GM12878 (cell line): ENCODE measurements at regions of chr18 and their contacts with region 1.

Region 1: GRCh38 chr18:57630002-57630753 is 8.5 kb upstream of the NARS1 start:
- DNase-seq: peak; percentile 65
- ATAC-seq: peak; percentile 93
- H3K4me3 ChIP-seq: peak overlapping the region; percentile 90
- H3K27ac ChIP-seq: peak overlapping the region; percentile 87
- H3K4me1 ChIP-seq: peaks cover 6% of the 10 kb centered on the region
- H3K27me3 ChIP-seq: no peaks in the 10 kb centered on the region
- CTCF ChIP-seq: peak; percentile 74 to 81 (median 78)
- EP300 ChIP-seq: no peak
- POLR2A ChIP-seq: peak; percentile 74
- RAD21 ChIP-seq: peak; percentile 82

Region 2: GRCh38 chr18:57077786-57078552 is 552.2 kb before region 1 on chr18:
- CTCF ChIA-PET with region 1: no interaction called
- POLR2A ChIA-PET with region 1: no interaction called
- RAD21 ChIA-PET with region 1: no interaction called
- SMC1A ChIA-PET with region 1: no interaction called
- in situ Hi-C with region 1: no loop called
- intact Hi-C with region 1: no loop called
- DNase-seq: peak; percentile 93
- ATAC-seq: peak; percentile 90
- H3K4me3 ChIP-seq: no peak overlapping the region
- H3K27ac ChIP-seq: peak overlapping the region; percentile 28; the same call in 1 of the 2 replicates
- H3K4me1 ChIP-seq: peaks cover 25% of the 10 kb centered on the region
- H3K27me3 ChIP-seq: no peaks in the 10 kb centered on the region; a peak in 1 of 4 replicates
- CTCF ChIP-seq: peak; percentile 14 to 38 (median 30); a peak in 3 of 6 replicates
- EP300 ChIP-seq: peak; percentile 89 to 92
- POLR2A ChIP-seq: no peak
- RAD21 ChIP-seq: peak; percentile 28; the same call in 1 of the 2 replicates

Region 3: GRCh38 chr18:57754577-57755338 is 124.6 kb after region 1 on chr18:
- CTCF ChIA-PET with region 1: no interaction called
- POLR2A ChIA-PET with region 1: no interaction called
- RAD21 ChIA-PET with region 1: interaction called, 3 read pairs
- SMC1A ChIA-PET with region 1: interaction called, 5 read pairs
- in situ Hi-C with region 1: no loop called
- intact Hi-C with region 1: loop called (anchors 10 kb)
- DNase-seq: peak; percentile 38
- ATAC-seq: peak; percentile 96
- H3K4me3 ChIP-seq: no peak overlapping the region
- H3K27ac ChIP-seq: no peak overlapping the region
- H3K4me1 ChIP-seq: no peaks in the 10 kb centered on the region
- H3K27me3 ChIP-seq: no peaks in the 10 kb centered on the region
- CTCF ChIP-seq: no peak
- EP300 ChIP-seq: peak in 1 of 2 experiments; percentile 63; a peak in 1 of 4 replicates
- POLR2A ChIP-seq: no peak
- RAD21 ChIP-seq: no peak

Region 4: DNA sequence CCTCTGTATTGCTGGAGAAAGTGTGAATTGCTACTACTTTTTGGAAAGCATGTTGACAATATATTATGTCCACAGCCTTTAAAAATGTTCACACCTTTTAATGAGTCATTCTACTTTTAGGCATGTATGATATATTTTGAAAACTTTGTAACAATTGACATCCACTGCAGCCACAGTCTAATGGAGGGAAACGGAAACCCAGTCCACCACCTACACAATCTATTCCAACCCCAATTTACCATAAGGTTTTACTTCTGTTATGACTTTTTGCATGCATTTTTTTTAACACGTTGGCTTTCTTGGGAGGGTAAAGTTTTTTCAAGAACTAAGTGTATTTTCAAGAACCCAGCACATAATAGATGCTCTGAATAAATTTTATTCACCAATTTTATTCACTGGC is 211.4 kb after region 1 on chr18:
- CTCF ChIA-PET with region 1: interaction called, 13 read pairs
- POLR2A ChIA-PET with region 1: interaction called, 3 read pairs
- RAD21 ChIA-PET with region 1: interaction called, 14 read pairs
- SMC1A ChIA-PET with region 1: interaction called, 9 read pairs
- in situ Hi-C with region 1: loop called (anchors 25 kb)
- intact Hi-C with region 1: loop called (anchors 1 kb)
- DNase-seq: peak; percentile 79
- ATAC-seq: peak; percentile 61
- H3K4me3 ChIP-seq: no peak overlapping the region
- H3K27ac ChIP-seq: no peak overlapping the region
- H3K4me1 ChIP-seq: peaks cover 26% of the 10 kb centered on the region
- H3K27me3 ChIP-seq: peaks cover 0 to 4% of the 10 kb centered on the region in 2 experiments; a peak in 3 of 4 replicates
- CTCF ChIP-seq: no peak
- EP300 ChIP-seq: peak; percentile 91 to 94
- POLR2A ChIP-seq: no peak
- RAD21 ChIP-seq: no peak

Region 5: GRCh38 chr18:57881818-57882413 is 251.7 kb after region 1 on chr18:
- CTCF ChIA-PET with region 1: interaction called, 15 read pairs
- POLR2A ChIA-PET with region 1: no interaction called
- RAD21 ChIA-PET with region 1: interaction called, 5 read pairs
- SMC1A ChIA-PET with region 1: interaction called, 7 read pairs
- in situ Hi-C with region 1: no loop called
- intact Hi-C with region 1: loop called (anchors 2 kb)
- DNase-seq: peak; percentile 32
- ATAC-seq: peak; percentile 98
- H3K4me3 ChIP-seq: no peak overlapping the region
- H3K27ac ChIP-seq: no peak overlapping the region
- H3K4me1 ChIP-seq: no peaks in the 10 kb centered on the region
- H3K27me3 ChIP-seq: no peaks in the 10 kb centered on the region
- CTCF ChIP-seq: peak; percentile 89 to 94 (median 90); a peak in 5 of 6 replicates
- EP300 ChIP-seq: no peak
- POLR2A ChIP-seq: no peak
- RAD21 ChIP-seq: peak; percentile 93

Region 6: DNA sequence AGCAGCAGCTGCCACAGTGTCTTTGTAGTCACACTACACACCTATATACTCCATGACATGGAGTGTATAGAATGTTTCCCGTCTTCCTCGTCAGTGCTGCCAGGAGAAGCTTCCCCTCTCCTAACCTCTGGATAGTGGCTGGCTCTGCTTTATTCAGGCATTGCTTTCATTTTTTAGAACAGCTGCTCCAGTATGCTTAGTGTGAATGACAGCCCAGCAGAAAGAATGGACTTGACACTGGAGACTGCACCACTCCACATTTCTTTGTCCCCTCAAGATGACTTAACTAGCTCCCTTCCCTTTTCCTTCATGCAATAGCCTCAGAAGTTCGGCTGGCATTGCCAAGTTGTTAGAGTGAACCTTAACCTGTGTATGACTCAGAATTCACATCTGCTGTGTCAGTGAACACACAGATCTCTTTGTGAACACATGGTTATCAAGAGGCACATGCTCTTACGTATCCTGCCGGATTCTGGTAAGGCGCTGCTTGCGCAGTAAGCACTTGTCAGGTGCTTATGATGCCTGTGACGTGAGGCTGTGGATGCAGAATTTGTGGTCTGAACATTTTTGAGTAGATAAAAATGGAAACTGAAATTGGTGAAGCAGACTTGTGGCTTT is 487.7 kb after region 1 on chr18:
- CTCF ChIA-PET with region 1: interaction called, 4 read pairs
- POLR2A ChIA-PET with region 1: interaction called, 4 read pairs
- RAD21 ChIA-PET with region 1: interaction called, 6 read pairs
- SMC1A ChIA-PET with region 1: interaction called, 4 read pairs
- in situ Hi-C with region 1: no loop called
- intact Hi-C with region 1: loop called (anchors 10 kb)
- DNase-seq: no peak
- ATAC-seq: no peak
- H3K4me3 ChIP-seq: no peak overlapping the region
- H3K27ac ChIP-seq: no peak overlapping the region
- H3K4me1 ChIP-seq: peaks cover 9% of the 10 kb centered on the region
- H3K27me3 ChIP-seq: no peaks in the 10 kb centered on the region
- CTCF ChIP-seq: no peak
- EP300 ChIP-seq: no peak
- POLR2A ChIP-seq: no peak
- RAD21 ChIP-seq: no peak